Activated CD4-positive, alpha-beta memory T cell treated with anti-CD3 and anti-CD28 coated beads, Interleukin-2, amount 10 ng/mL, durations not matched to agents 7 days and 5 days (primary cell): ENCODE measurements at regions of chr6 and their contacts with region 1.

Region 1: DNA sequence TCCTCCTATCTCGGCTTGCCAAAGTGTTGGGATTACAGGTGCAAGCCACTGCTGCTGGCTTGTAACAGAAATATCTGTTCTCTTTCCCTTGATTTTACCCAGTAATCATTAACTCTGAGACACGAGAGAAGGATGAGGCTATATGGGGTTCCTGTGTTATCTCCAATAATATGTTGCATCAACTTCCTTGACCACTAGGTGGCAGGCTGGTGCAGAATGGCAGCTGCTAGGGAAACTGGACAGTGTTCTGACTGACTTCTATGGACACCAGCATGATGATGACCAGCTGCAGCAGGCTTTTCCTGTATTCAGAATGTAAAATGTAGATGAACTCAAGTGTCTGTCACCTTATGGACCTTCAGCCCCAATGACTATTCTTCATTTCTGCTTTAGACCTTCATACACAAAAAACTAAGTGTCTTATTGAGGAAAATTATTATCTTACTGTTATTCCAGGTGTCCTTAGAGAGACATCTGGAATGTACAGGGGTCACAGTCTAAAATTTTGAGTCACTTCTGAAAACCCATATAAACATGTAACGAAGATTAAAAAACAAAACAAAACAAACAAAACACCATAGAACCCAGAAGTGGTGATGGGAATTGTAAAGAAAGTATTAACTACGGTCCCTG is 20.4 kb upstream of the CD109 start:
- DNase-seq: peak; percentile 75
- H3K4me3 Mint-ChIP-seq: no peak overlapping the region
- H3K27ac Mint-ChIP-seq: no peak overlapping the region
- H3K4me1 Mint-ChIP-seq: peaks cover 2% of the 10 kb centered on the region
- H3K27me3 Mint-ChIP-seq: peaks cover 16% of the 10 kb centered on the region

Region 2: GRCh38 chr6:73418081-73418741 is 257.4 kb before region 1 on chr6:
- CTCF ChIA-PET with region 1: no interaction called
- POLR2A ChIA-PET with region 1: no interaction called
- DNase-seq: no peak
- H3K4me3 Mint-ChIP-seq: no peak overlapping the region
- H3K27ac Mint-ChIP-seq: peak overlapping the region; percentile 61
- H3K4me1 Mint-ChIP-seq: peaks cover 32% of the 10 kb centered on the region
- H3K27me3 Mint-ChIP-seq: no peaks in the 10 kb centered on the region

Region 3: GRCh38 chr6:73688351-73688750 is 12.8 kb after region 1 on chr6:
- CTCF ChIA-PET with region 1: interaction called, 11 read pairs
- POLR2A ChIA-PET with region 1: no interaction called
- DNase-seq: no peak
- H3K4me3 Mint-ChIP-seq: no peak overlapping the region
- H3K27ac Mint-ChIP-seq: no peak overlapping the region
- H3K4me1 Mint-ChIP-seq: no peaks in the 10 kb centered on the region
- H3K27me3 Mint-ChIP-seq: peaks cover 38% of the 10 kb centered on the region

Region 4: GRCh38 chr6:73732845-73733675 is 57.5 kb after region 1 on chr6:
- CTCF ChIA-PET with region 1: interaction called, 89 read pairs
- POLR2A ChIA-PET with region 1: interaction called, 3 read pairs
- DNase-seq: peak; percentile 78
- H3K4me3 Mint-ChIP-seq: no peak overlapping the region
- H3K27ac Mint-ChIP-seq: no peak overlapping the region
- H3K4me1 Mint-ChIP-seq: peaks cover 9% of the 10 kb centered on the region
- H3K27me3 Mint-ChIP-seq: no peaks in the 10 kb centered on the region

Region 5: GRCh38 chr6:74431873-74432580 is 756.4 kb after region 1 on chr6:
- CTCF ChIA-PET with region 1: no interaction called
- POLR2A ChIA-PET with region 1: no interaction called
- DNase-seq: no peak
- H3K4me3 Mint-ChIP-seq: no peak overlapping the region
- H3K27ac Mint-ChIP-seq: no peak overlapping the region
- H3K4me1 Mint-ChIP-seq: no peaks in the 10 kb centered on the region
- H3K27me3 Mint-ChIP-seq: no peaks in the 10 kb centered on the region